A673 (cell line): ENCODE measurements at regions of chr20 and their contacts with region 1.

Region 1: DNA sequence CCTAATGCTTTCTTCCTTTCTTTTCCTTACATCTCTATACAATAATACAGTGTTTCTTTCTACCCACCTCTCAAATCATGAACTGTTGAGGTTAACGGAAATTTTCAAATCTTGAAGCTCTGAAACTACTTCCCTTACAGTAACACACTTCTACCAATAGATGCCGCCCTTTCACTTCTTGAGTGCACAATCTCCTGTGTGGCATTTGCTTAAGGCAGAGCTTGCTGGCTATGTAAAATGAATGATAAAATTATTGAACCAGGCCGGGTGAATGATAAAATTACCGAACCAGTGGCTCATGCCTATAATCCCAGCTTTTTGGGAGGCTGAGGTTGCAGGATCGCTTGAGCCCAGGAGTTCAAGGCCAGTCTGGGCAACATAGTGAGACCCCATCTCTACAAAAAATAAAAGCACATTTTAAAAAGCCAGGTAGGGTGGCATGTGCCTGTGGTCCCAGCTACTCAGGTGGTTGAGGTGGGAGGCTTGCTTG is 56.8 kb downstream of the KCNS1 start:
- DNase-seq: peak; percentile 87
- H3K4me3 ChIP-seq: no peak overlapping the region
- H3K27ac ChIP-seq: no peak overlapping the region
- H3K4me1 ChIP-seq: no peaks in the 10 kb centered on the region
- H3K27me3 ChIP-seq: no peaks in the 10 kb centered on the region
- CTCF ChIP-seq: peak; percentile 92

Region 2: DNA sequence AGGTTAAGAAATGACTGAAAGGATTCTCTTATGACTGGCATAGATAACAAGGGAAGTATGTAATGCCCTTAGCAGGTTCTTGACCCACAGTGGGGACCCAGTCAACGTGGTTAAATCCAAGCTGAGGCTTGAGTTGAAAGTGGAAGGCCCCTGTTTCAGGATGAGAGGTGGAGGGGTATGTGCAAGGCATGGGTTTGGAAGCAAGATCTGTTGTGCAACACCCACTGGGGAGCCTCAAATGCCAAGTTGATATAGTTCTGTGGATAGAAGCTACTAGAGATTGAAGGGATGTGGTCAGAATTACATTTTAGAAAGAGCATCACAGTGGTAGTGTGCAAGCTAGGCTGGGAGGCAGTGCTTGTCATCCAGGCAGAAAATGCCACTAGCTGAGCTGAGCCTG is 129.2 kb before region 1 on chr20:
- CTCF ChIA-PET with region 1: no interaction called
- POLR2A ChIA-PET with region 1: no interaction called
- intact Hi-C with region 1: no loop called
- DNase-seq: no peak
- H3K4me3 ChIP-seq: no peak overlapping the region
- H3K27ac ChIP-seq: no peak overlapping the region
- H3K4me1 ChIP-seq: no peaks in the 10 kb centered on the region
- H3K27me3 ChIP-seq: no peaks in the 10 kb centered on the region
- CTCF ChIP-seq: no peak

Region 3: GRCh38 chr20:45095753-45096371 is 51.7 kb after region 1 on chr20:
- CTCF ChIA-PET with region 1: interaction called, 22 read pairs
- POLR2A ChIA-PET with region 1: no interaction called
- intact Hi-C with region 1: loop called (anchors 1 kb)
- DNase-seq: peak; percentile 72
- H3K4me3 ChIP-seq: no peak overlapping the region
- H3K27ac ChIP-seq: no peak overlapping the region
- H3K4me1 ChIP-seq: no peaks in the 10 kb centered on the region
- H3K27me3 ChIP-seq: no peaks in the 10 kb centered on the region
- CTCF ChIP-seq: peak; percentile 78

Region 4: DNA sequence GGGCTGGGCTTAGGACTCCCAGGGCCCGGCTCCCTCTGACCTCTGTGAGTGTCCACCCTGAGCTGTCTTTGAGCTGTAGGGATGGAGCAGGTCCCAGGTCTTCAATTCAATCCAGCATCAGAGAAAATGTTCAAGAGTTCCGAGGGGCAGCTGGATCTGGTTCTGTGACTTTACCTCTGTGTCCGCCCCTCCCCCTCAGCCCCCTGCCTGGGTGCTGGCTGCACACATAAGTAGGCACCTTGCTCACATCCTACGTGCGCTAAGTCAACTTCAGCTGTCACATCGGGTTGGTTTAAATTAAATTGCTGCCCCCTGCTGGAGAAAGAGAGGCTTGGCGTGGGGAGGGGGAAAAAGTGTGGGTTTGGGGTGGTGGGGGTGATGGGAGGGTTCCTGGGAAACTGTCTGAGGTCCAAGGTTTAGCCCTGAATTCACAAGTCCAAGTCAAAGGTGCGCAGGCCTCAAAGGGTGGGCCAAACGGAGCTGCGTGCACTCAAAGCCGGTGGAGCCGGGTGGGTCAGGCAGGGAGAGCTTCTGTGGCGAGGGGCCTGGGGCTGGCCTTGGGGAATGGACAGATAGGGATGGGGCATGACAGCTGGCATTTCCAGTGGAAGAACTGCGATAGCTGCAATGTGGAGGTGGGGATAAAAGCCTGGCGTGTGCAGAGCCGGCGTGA is 67.8 kb after region 1 on chr20:
- CTCF ChIA-PET with region 1: interaction called, 26 read pairs
- POLR2A ChIA-PET with region 1: no interaction called
- intact Hi-C with region 1: no loop called
- DNase-seq: peak; percentile 23
- H3K4me3 ChIP-seq: no peak overlapping the region
- H3K27ac ChIP-seq: no peak overlapping the region
- H3K4me1 ChIP-seq: no peaks in the 10 kb centered on the region
- H3K27me3 ChIP-seq: no peaks in the 10 kb centered on the region
- CTCF ChIP-seq: peak; percentile 74

Region 5: DNA sequence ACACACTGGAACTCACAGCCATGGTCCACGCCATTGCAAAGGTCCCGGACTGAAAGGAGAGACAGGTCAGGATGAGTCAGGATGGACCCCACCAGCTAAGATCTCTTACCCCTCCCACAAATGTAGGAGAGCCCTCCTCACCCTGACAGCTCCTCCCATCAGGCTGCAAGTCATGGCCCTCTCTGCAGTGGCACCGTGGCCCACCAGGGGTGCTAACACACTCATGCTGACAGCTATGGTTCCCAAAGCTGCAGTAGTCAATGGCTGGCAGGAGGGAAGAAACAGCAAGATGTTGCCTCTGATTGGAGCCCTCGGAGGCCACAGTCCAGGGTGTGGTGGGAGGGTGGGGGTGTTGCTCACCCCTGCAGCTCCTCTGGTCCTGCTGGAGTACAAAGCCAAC is 256.8 kb after region 1 on chr20:
- CTCF ChIA-PET with region 1: interaction called, 14 read pairs
- POLR2A ChIA-PET with region 1: no interaction called
- intact Hi-C with region 1: no loop called
- DNase-seq: peak; percentile 79
- H3K4me3 ChIP-seq: no peak overlapping the region
- H3K27ac ChIP-seq: no peak overlapping the region
- H3K4me1 ChIP-seq: peaks cover 30% of the 10 kb centered on the region
- H3K27me3 ChIP-seq: no peaks in the 10 kb centered on the region
- CTCF ChIP-seq: peak; percentile 60